Head of caudate nucleus (tissue), 42 donors: ENCODE measurements at regions of chr17 and their contacts with region 1.

Region 1: GRCh38 chr17:43576563-43577229 is 30.6 kb upstream of the ETV4 start:
- DNase-seq: peak; percentile 26 to 88 (median 75)

Region 2: DNA sequence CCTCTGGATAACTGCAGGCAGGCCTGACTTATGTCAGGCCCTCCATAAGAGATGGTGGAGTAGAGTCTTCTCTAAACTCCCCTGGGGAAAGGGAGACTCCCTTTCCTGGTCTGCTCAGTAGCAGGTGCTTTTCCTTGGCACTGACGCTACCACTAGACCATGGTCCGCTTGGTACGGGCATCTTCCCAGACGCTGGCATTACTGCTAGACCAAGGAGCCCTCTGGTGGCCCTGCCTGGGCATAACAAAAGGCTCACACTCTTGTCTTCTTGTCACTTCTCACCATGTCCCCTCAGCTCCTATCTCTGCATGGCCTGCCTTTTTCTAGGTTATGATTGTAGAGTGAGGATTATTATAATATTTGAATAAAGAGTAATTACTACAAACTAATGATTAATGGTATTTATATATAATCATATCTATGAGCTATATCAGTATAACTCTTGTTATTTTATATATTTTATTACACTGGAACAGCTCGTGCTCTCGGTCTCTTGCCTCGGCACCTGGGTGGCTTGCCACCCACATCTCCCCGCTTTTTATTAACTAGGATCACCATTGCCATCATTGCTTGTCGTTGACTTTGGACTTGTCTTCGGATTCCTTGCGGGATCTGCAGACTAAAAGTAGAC is 237.7 kb before region 1 on chr17:
- intact Hi-C with region 1: no loop called
- DNase-seq: peak; percentile 65 to 94 (median 89)

Region 3: DNA sequence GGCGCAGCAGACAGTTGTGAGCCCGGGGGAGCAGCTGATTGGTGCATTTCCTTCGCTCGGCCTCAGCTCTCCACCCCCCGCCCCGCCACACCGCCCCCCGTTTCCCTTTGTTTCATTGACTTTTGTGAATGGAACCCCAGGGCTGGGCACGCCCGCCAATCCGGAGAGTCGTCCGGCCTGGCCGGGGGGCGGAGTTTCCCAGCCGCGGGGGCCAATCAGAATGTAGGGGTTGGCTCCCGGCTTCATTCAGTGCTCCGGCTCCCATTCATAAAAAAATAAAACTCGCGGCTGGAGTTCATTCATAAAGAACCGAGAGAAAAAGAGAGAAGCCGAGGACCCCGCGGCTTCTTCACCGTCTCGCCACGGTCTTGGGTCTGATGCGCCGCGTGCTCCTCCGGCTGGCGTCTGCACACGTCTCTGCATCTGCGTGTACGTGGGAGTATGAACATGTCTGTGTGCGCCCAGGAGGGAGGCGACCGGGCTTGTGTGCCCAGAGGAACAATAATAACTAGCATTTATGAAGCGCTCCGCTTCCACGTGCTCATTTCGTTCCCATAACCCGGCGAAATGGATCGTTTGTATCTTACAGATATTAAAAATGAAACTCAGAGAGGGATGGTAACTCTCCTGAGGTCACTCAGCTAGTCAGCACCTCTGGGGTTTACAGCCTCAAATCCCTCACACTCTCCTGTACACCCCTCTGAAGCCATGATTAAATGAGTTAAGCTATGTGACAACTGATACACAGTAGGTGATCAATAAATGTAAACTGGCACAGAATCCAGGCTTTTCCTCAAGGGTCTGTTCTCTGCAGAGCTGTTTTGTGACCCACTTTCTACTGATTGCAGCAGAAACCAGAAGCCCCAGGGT is 30.1 kb before region 1 on chr17 and contains the start of gene ETV4:
- intact Hi-C with region 1: no loop called
- DNase-seq: peak; percentile 86 to 98 (median 95)

Region 4: DNA sequence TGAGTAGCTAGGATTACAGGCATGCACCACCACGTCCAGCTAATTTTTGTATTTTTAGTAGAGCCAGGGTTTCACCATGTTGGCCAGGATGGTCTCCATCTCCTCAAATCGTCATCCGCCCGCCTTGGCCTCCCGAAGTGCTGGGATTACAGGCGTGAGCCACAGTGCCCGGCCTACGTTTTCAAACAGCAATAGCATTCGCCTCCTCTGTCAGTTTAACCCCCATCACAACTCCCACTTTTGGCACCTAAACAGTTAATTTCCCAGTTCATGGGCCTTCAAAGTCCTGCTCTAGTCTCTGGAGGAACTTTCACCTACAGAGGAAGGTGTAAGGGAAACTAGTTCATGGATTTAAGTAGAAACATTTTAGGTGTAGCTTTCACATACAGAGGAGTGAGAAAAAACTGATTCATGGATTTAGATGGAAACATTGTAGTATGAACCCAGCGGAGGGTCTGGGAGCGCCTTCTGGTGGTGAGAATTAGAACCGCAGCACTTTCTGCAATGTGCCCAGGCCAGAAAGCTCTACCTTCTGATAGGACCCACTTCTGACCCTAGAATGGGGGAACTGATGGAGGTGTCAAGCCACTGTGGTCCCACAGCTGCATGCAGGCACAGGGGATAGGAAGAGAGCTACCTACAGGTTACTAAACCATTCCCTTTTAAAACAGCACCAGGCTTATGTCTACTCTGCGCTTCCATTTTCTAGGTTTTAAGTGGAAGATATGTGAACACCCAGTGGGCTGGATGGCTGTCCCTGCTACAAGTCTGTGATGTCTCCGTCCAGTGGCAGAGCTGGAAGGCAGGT is 97.0 kb after region 1 on chr17:
- intact Hi-C with region 1: loop called (anchors 2 kb)
- DNase-seq: peak in 41 of 42 donors; percentile 51 to 92 (median 78)

Region 5: DNA sequence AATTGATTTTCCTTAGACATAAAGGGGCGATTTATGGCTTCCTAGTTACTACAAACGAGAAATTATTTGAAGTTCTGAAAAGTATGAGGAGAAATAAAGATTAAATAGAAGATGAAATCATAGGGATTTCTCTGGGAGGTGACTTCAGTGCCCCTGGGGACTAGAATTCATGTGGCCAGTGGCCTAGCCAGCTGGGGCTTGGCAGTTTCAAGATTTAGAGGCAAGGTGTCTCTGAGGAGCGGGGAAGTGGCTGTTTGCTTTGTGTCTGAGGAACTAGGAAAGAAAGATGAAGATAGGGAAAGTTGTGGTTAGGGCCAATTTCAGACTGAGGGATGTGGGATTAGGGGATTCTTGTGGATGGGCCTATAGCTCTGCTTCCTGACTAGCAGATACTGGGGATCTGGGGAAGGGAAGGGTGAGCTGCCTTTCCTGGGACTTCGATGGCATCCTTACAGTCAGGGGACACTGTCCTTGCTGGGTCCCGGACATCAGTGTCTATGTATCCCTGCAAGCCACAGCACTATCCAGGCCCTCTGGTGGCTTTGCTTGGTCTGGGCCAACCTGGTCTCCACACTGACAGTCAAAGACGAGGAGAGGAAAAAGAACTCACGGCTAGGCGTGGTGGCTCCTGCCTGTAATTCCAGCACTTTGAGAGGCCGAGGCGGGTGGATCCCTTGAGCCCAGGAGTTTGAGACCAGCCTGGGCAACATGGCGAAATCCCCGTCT is 107.4 kb after region 1 on chr17:
- intact Hi-C with region 1: no loop called
- DNase-seq: no peak

Region 6: GRCh38 chr17:43694077-43694870 is 117.6 kb after region 1 on chr17:
- intact Hi-C with region 1: no loop called
- DNase-seq: peak; percentile 50 to 92 (median 78)